ENCODE measurements at regions of chr5 and their contacts with region 1.

Region 1: GRCh38 chr5:98928873-98929696 is at the start of gene CHD1:
- DNase-seq: peak; percentile 91
- ATAC-seq: peak; percentile 88
- H3K4me3 ChIP-seq: peak within 1 kb of the TSS; percentile 83 to 95 (median 93)
- H3K27ac ChIP-seq: peak within 1 kb of the TSS; percentile 100
- H3K4me1 ChIP-seq: peaks cover 43% of the 10 kb centered on the region
- H3K27me3 ChIP-seq: no peaks in the 10 kb centered on the region; a peak in 1 of 5 replicates
- CTCF ChIP-seq: no peak; the same call in 1 of the 2 replicates
- EP300 ChIP-seq: peak in 1 of 2 experiments; percentile 38; a peak in 1 of 4 replicates
- POLR2A ChIP-seq: peak; percentile 84 to 91
- RAD21 ChIP-seq: no peak
- total RNA-seq, gene CHD1: 55.9 and 79.7 TPM in 2 replicates

Region 2: GRCh38 chr5:98700730-98701129 is 228.4 kb before region 1 on chr5:
- CTCF ChIA-PET with region 1: no interaction called
- POLR2A ChIA-PET with region 1: no interaction called
- in situ Hi-C with region 1: no loop called
- intact Hi-C with region 1: no loop called
- DNase-seq: no peak
- ATAC-seq: no peak
- H3K4me3 ChIP-seq: no peak overlapping the region
- H3K27ac ChIP-seq: no peak overlapping the region
- H3K4me1 ChIP-seq: no peaks in the 10 kb centered on the region
- H3K27me3 ChIP-seq: no peaks in the 10 kb centered on the region
- CTCF ChIP-seq: no peak
- EP300 ChIP-seq: no peak
- POLR2A ChIP-seq: no peak
- RAD21 ChIP-seq: no peak

Region 3: GRCh38 chr5:98773464-98774191 is 155.5 kb before region 1 on chr5 and contains the start of gene RGMB:
- CTCF ChIA-PET with region 1: no interaction called
- POLR2A ChIA-PET with region 1: no interaction called
- in situ Hi-C with region 1: loop called (anchors 5 kb)
- intact Hi-C with region 1: loop called (anchors 2 kb)
- DNase-seq: peak; percentile 95
- ATAC-seq: peak; percentile 88
- H3K4me3 ChIP-seq: peak within 1 kb of the TSS; percentile 78 to 91 (median 80)
- H3K27ac ChIP-seq: peak within 1 kb of the TSS; percentile 78
- H3K4me1 ChIP-seq: peaks cover 52% of the 10 kb centered on the region
- H3K27me3 ChIP-seq: peaks cover 0 to under 1% of the 10 kb centered on the region in 2 experiments; a peak in 1 of 5 replicates
- CTCF ChIP-seq: no peak
- EP300 ChIP-seq: no peak
- POLR2A ChIP-seq: peak; percentile 64 to 87; a peak in 3 of 4 replicates
- RAD21 ChIP-seq: peak; percentile 32; the same call in 1 of the 2 replicates
- total RNA-seq, gene RGMB: 2.3 and 3.8 TPM in 2 replicates

Region 4: GRCh38 chr5:98905857-98906690 is 23.0 kb before region 1 on chr5:
- CTCF ChIA-PET with region 1: no interaction called
- POLR2A ChIA-PET with region 1: interaction called, 4 read pairs
- in situ Hi-C with region 1: no loop called
- intact Hi-C with region 1: loop called (anchors 2 kb)
- DNase-seq: peak; percentile 44
- ATAC-seq: peak; percentile 26; the same call in 1 of the 3 replicates
- H3K4me3 ChIP-seq: no peak overlapping the region
- H3K27ac ChIP-seq: no peak overlapping the region
- H3K4me1 ChIP-seq: no peaks in the 10 kb centered on the region
- H3K27me3 ChIP-seq: no peaks in the 10 kb centered on the region
- CTCF ChIP-seq: peak; percentile 56
- EP300 ChIP-seq: no peak
- POLR2A ChIP-seq: no peak
- RAD21 ChIP-seq: peak; percentile 56; the same call in 1 of the 2 replicates

Region 5: GRCh38 chr5:98913911-98914310 is 15.2 kb before region 1 on chr5:
- CTCF ChIA-PET with region 1: no interaction called
- POLR2A ChIA-PET with region 1: interaction called, 10 read pairs
- in situ Hi-C with region 1: no loop called
- intact Hi-C with region 1: loop called (anchors 2 kb)
- DNase-seq: no peak
- ATAC-seq: no peak
- H3K4me3 ChIP-seq: no peak overlapping the region
- H3K27ac ChIP-seq: no peak overlapping the region
- H3K4me1 ChIP-seq: no peaks in the 10 kb centered on the region
- H3K27me3 ChIP-seq: no peaks in the 10 kb centered on the region
- CTCF ChIP-seq: no peak
- EP300 ChIP-seq: no peak
- POLR2A ChIP-seq: no peak
- RAD21 ChIP-seq: no peak

Region 6: GRCh38 chr5:98940581-98940980 is 11.5 kb after region 1 on chr5:
- CTCF ChIA-PET with region 1: no interaction called
- POLR2A ChIA-PET with region 1: interaction called, 11 read pairs
- in situ Hi-C with region 1: no loop called
- intact Hi-C with region 1: no loop called
- DNase-seq: no peak
- ATAC-seq: no peak
- H3K4me3 ChIP-seq: no peak overlapping the region
- H3K27ac ChIP-seq: no peak overlapping the region
- H3K4me1 ChIP-seq: peaks cover 24% of the 10 kb centered on the region
- H3K27me3 ChIP-seq: no peaks in the 10 kb centered on the region
- CTCF ChIP-seq: no peak
- EP300 ChIP-seq: no peak
- POLR2A ChIP-seq: no peak
- RAD21 ChIP-seq: no peak

Region 7: DNA sequence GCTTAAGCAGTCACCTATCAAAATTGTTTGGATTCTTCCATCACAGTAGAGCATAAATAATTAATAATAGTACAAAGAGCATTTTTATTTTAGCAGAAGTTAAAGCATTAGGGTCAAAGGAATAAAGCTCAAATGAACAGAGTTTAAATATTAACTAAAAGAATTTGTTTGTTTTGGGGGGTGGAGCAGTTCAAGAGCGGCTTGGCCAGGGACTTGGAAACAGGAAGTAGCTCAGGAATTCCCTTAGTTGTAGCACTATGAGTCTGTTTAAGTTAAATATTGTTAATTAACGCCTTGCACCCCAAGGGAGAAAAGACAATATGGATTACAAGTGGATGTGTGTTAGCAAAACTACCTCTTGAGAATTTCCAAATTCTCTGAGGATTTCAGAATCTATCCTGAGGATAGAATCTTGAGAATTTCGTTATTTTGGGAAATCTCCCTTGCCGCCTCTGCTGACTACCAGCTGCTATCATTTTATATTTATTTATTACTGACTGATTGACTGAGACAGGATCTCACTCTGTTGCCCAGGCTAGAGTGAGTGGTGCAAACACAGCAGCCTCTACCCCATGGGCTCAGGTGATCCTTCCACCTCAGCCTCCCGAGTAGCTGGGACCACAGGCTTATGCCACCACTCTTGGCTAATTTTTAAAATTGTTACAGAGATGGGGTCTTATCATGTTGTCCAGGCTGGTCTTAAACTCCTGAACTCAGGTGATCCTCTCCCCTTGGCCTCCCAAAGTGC is 96.4 kb after region 1 on chr5:
- CTCF ChIA-PET with region 1: no interaction called
- POLR2A ChIA-PET with region 1: interaction called, 21 read pairs
- in situ Hi-C with region 1: no loop called
- intact Hi-C with region 1: loop called (anchors 1 kb)
- DNase-seq: peak; percentile 76
- ATAC-seq: peak; percentile 94
- H3K4me3 ChIP-seq: peak overlapping the region in 1 of 3 experiments; percentile 3; a peak in 1 of 6 replicates
- H3K27ac ChIP-seq: peak overlapping the region; percentile 68
- H3K4me1 ChIP-seq: peaks cover 54% of the 10 kb centered on the region
- H3K27me3 ChIP-seq: no peaks in the 10 kb centered on the region
- CTCF ChIP-seq: no peak
- EP300 ChIP-seq: peak in 1 of 2 experiments; percentile 66; a peak in 1 of 4 replicates
- POLR2A ChIP-seq: no peak
- RAD21 ChIP-seq: no peak